ENCODE measurements at regions of chr3 and their contacts with region 1.

Region 1: DNA sequence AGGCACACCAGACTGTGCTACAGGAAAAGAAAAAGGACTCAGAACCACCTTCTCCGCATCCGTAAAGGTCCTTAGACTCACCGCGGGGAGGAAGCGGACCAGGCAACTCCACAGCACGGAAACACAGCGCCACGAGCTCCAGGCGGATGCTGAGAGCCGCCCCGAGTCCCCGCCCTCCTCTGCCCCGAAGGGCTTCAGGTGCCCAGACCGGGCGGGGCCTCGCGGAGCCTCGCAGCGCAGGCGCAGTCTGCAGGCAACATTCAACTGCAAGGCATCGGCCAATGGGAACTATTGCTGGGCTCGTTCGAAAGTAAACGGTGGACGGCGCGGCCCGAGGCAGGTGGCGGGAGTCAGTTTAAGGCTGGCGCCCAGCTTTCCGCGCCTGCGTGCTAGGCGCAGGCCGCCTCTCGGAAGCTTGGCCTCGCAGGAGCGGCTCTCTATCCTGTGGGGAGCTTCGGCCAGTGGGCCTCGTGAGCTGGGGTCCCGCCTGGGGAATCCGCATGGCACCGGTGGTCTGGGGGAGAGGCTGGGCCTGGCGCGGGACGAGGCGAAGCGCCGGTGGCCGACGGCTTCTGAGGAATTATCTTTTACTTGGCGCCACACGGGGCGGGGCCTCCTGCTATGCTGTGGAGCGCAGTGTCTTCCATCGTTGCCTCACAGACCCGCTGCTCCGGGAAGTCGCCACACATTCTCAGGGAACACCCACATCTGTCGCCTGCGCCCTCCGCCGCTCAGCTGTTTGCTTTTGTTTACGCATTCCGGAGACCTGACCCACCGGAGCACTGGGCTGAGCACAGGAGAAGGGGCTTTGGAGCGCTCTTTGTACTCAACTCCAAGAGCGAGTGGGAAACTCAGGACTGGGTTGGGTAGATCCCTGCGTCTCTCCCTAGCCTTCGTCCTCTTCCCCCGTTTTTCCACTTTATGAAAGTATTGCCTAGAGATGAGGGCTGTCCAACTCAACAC is at the start of gene TRIM59:
- DNase-seq: peak; percentile 92 to 99 (median 95)
- ATAC-seq: peak; percentile 96
- H3K4me3 ChIP-seq: peak within 1 kb of the TSS; percentile 80 to 91
- H3K4me3 Mint-ChIP-seq: peak within 1 kb of the TSS; percentile 95
- H3K27ac ChIP-seq: peak within 1 kb of the TSS; percentile 60 to 85
- H3K27ac Mint-ChIP-seq: peak within 1 kb of the TSS; percentile 93
- H3K4me1 ChIP-seq: peaks cover 22% of the 10 kb centered on the region
- H3K4me1 Mint-ChIP-seq: peaks cover 38% of the 10 kb centered on the region
- H3K27me3 ChIP-seq: no peaks in the 10 kb centered on the region
- H3K27me3 Mint-ChIP-seq: no peaks in the 10 kb centered on the region
- CTCF ChIP-seq: no peak
- total RNA-seq, gene TRIM59: 15.0 to 15.5 TPM

Region 2: GRCh38 chr3:160368804-160369203 is 81.1 kb before region 1 on chr3:
- CTCF ChIA-PET with region 1: no interaction called
- POLR2A ChIA-PET with region 1: no interaction called
- intact Hi-C with region 1: no loop called
- DNase-seq: peak in 2 of 9 experiments; percentile 1 to 35
- ATAC-seq: peak; percentile 48
- H3K4me3 ChIP-seq: no peak overlapping the region
- H3K4me3 Mint-ChIP-seq: no peak overlapping the region
- H3K27ac ChIP-seq: no peak overlapping the region
- H3K27ac Mint-ChIP-seq: no peak overlapping the region
- H3K4me1 ChIP-seq: peaks cover 19% of the 10 kb centered on the region
- H3K4me1 Mint-ChIP-seq: peaks cover 24% of the 10 kb centered on the region
- H3K27me3 ChIP-seq: no peaks in the 10 kb centered on the region
- H3K27me3 Mint-ChIP-seq: no peaks in the 10 kb centered on the region
- CTCF ChIP-seq: no peak

Region 3: GRCh38 chr3:160754855-160755747 is 305.2 kb after region 1 on chr3:
- CTCF ChIA-PET with region 1: no interaction called
- POLR2A ChIA-PET with region 1: no interaction called
- intact Hi-C with region 1: loop called (anchors 1 to 10 kb)
- DNase-seq: peak; percentile 79 to 95 (median 89)
- ATAC-seq: peak; percentile 85
- H3K4me3 ChIP-seq: peak overlapping the region; percentile 79 to 90
- H3K4me3 Mint-ChIP-seq: peak overlapping the region; percentile 90
- H3K27ac ChIP-seq: peak overlapping the region; percentile 66 to 84
- H3K27ac Mint-ChIP-seq: peak overlapping the region; percentile 75
- H3K4me1 ChIP-seq: peaks cover 26% of the 10 kb centered on the region
- H3K4me1 Mint-ChIP-seq: peaks cover 33% of the 10 kb centered on the region
- H3K27me3 ChIP-seq: no peaks in the 10 kb centered on the region
- H3K27me3 Mint-ChIP-seq: peaks cover 13% of the 10 kb centered on the region
- CTCF ChIP-seq: no peak